Cardiac septum (tissue), 1 donor: ENCODE measurements at regions of chr9 and their contacts with region 1.

Region 1: GRCh38 chr9:127396808-127397497 is at the start of gene SLC2A8:
- DNase-seq: peak; percentile 99
- total RNA-seq, gene SLC2A8: 14.5 TPM

Region 2: GRCh38 chr9:127224178-127224882 is 172.6 kb before region 1 on chr9:
- intact Hi-C with region 1: loop called (anchors 5 kb)
- DNase-seq: peak; percentile 94